ENCODE measurements at regions of chr2 and their contacts with region 1.

Region 1: DNA sequence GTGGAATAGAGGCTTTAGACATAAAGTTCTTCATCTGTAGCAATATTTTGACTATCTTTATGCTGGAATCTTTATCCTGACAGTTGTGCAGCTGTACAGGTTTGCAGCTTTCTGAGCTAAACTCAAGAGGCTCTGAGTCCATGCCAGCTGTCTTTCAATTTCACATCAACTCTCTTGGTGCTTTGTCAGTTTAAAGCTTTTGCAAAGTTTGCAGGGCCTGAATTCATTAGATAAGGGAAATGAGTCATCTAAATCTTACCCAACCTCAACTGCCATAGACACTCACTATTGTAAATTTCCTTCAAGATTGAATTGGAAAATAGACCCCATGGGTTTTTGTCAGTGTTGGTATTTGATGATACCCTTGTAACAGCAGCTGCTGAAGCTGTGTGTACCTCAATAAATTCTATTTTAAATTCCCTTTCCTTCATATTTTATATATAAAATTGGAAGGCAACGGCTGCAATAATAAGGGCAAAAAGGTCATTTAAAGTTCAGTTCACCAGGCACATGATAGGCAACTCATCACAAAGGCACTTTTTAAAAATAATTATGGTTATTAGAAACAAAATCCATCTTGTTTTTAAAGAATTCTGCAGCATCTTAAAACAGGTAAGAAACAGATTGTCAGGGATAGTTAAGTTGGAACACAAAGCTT is 169.9 kb upstream of the SLC39A10 start:
- DNase-seq: peak; percentile 77
- H3K4me3 Mint-ChIP-seq: peak overlapping the region; percentile 64
- H3K27ac Mint-ChIP-seq: peak overlapping the region; percentile 68
- H3K4me1 Mint-ChIP-seq: peaks cover 29% of the 10 kb centered on the region
- H3K27me3 Mint-ChIP-seq: no peaks in the 10 kb centered on the region

Region 2: GRCh38 chr2:195364015-195364965 is 122.8 kb before region 1 on chr2:
- intact Hi-C with region 1: loop called (anchors 10 kb)
- DNase-seq: no peak
- H3K4me3 Mint-ChIP-seq: no peak overlapping the region
- H3K27ac Mint-ChIP-seq: peak overlapping the region; percentile 40
- H3K4me1 Mint-ChIP-seq: peaks cover 21% of the 10 kb centered on the region
- H3K27me3 Mint-ChIP-seq: no peaks in the 10 kb centered on the region

Region 3: DNA sequence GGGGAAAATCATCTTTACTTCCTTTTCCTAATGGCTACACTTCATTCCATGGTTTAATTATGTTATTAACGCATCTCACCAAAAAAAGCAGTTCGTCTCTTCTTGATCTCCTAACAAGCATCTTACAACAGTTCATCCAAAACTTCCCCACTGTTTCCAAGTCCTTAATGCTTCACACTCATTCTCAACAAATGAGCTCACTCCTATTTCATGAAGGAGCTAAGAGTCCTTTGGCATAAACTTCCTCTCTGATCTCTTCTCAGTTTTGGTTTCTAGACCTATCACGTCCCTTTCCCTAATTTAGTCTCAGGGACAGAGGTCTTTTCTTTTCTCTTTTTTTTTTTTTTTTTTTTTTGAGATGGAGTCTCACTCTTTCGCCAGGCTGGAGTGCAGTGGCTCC is 36.0 kb before region 1 on chr2:
- intact Hi-C with region 1: loop called (anchors 1 kb)
- DNase-seq: no peak
- H3K4me3 Mint-ChIP-seq: no peak overlapping the region
- H3K27ac Mint-ChIP-seq: no peak overlapping the region
- H3K4me1 Mint-ChIP-seq: peaks cover 16% of the 10 kb centered on the region
- H3K27me3 Mint-ChIP-seq: no peaks in the 10 kb centered on the region

Region 4: DNA sequence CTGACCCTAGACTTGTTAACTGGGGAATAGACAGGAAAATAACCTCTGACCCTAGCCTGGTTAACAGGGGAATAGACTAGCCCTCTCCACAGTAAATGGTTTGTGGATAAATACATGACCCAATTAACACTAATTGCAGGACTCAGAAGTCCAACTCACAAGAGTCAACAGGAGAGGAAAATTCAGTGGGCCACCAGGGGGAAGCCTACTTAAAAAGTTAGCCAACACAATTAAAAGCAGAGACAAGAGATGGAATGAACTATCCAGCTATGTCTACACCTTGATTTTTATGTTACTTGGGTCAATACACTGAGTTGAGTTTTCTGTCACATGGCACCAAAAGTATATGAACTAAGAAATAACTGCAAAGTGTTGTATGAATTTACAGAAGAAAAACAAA is 11.1 kb after region 1 on chr2:
- intact Hi-C with region 1: loop called (anchors 1 kb)
- DNase-seq: peak; percentile 78
- H3K4me3 Mint-ChIP-seq: no peak overlapping the region
- H3K27ac Mint-ChIP-seq: peak overlapping the region; percentile 10
- H3K4me1 Mint-ChIP-seq: peaks cover 38% of the 10 kb centered on the region
- H3K27me3 Mint-ChIP-seq: no peaks in the 10 kb centered on the region

Region 5: GRCh38 chr2:195552581-195552980 is 65.5 kb after region 1 on chr2:
- intact Hi-C with region 1: no loop called
- DNase-seq: no peak
- H3K4me3 Mint-ChIP-seq: peak overlapping the region; percentile 68
- H3K27ac Mint-ChIP-seq: peak overlapping the region; percentile 90
- H3K4me1 Mint-ChIP-seq: peaks cover 55% of the 10 kb centered on the region
- H3K27me3 Mint-ChIP-seq: no peaks in the 10 kb centered on the region

Measured in activated CD4-positive, alpha-beta T cell treated with anti-CD3 and anti-CD28 coated beads, Interleukin-2, amount 10 ng/mL, durations not matched to agents 24 days and 14 days (primary cell).